HEK293T (cell line): ENCODE measurements at regions of chr2 and their contacts with region 1.

Region 1: GRCh38 chr2:231601349-231602229 is 8.9 kb downstream of the TEX44 start:
- DNase-seq: peak; percentile 77

Region 2: GRCh38 chr2:231563378-231563961 is 38.1 kb before region 1 on chr2:
- CTCF ChIA-PET with region 1: interaction called, 11 read pairs
- POLR2A ChIA-PET with region 1: no interaction called
- DNase-seq: peak; percentile 72

Region 3: DNA sequence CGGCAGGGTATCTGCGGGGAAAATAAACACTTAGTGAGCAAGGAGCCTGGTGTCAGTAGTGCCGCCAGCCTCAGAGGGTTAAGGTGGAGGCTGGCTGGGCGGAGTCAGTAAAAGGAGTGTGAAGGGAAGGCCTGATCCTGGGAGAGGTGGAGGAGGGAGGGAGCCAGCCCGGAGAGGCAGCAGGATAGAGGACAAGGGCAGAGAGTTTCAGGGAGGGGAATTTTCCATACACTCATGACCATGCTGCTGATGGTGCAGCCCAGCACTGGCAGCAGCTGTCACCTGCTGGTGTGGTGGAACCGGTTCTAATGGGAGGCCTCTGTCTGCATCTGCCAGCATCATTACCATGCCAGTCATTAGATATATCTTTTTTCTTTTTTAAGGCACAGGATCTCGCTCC is 11.0 kb before region 1 on chr2:
- CTCF ChIA-PET with region 1: interaction called, 23 read pairs
- POLR2A ChIA-PET with region 1: interaction called, 3 read pairs
- DNase-seq: no peak

Region 4: GRCh38 chr2:231655897-231656296 is 54.3 kb after region 1 on chr2:
- CTCF ChIA-PET with region 1: no interaction called
- POLR2A ChIA-PET with region 1: no interaction called
- DNase-seq: no peak

Region 5: DNA sequence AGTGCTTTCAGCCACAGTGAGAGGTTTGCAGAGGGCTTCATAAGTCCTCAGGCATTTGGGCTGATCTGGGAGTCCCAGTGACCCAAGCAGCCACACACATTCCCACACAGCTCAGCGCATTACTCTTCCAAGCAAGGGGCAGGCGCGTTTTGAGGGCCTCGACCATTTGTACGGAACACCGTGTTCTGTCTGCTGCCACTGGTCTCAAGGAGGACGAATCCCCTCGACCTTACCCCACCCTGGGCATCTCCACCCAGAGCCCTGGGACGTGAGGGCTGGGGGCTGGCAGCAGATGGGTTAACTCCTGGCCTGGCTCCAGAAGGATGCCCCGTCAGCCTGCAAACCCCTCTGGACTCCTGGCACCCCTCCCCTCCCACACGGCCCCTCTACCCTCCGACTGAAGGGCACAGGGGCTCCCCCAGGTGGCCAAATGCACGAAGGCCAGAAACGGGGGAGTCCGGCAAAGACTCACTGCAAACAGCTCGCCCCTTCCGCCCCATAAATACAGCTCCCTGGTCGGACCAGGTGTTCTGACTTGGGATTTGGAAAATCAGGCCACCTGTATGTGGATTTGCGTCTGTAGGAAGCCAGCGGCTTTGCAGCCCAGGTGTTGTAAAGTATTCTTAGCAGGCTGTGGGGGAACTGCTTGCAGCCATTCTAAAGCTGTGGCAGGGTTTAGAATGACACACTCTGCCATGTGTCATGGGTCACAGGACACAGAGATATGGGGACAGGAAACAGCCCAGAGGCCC is 73.2 kb after region 1 on chr2:
- CTCF ChIA-PET with region 1: interaction called, 12 read pairs
- POLR2A ChIA-PET with region 1: no interaction called
- DNase-seq: peak; percentile 56